Posterior vena cava (tissue), 2 donors: ENCODE measurements at regions of chr7 and their contacts with region 1.

Region 1: DNA sequence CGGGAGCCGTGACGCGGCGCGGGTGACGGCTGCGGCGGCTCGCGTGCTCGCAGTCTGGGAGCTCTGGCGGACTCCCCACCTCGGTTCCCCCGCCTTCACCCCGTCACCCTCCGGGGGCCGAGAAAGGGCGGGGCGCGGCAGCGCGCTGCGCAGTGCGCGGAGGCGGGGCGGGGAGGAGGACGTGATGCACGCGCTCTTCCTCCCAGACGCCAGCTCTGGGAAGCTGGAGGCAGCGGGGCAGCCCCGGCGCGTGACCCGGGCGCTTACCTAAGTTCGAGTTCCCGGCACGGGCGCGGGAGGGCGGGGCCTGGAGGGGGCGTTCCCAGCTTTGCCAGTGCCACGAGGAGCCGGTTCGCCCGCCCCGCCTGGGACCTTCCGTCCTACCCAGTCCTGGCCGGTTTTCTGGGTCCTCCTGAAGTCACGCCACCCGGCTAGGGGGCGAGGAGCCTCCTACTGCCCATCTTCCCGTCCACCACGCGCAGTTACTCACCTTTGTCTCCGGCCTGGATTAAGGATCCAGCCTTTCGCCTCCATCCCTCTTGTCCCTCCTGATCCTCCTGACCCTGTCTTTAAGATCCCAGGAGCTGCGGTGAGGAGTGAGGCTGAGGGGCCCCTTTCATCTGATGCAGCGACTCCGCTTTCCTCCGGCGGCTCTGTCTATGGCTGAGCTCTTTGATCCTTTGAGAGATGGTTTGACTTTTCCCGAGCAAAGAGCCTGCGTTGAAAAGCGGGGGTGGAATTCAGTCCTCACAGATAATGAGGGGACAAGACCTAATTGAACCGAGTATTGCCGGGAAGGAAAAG is 470 bp upstream of the NAMPT start:
- DNase-seq: peak; percentile 100

Region 2: GRCh38 chr7:106421181-106421762 is 136.0 kb after region 1 on chr7:
- intact Hi-C with region 1: loop called in 1 of 2 experiments (anchors 5 kb)
- DNase-seq: peak; percentile 95